ENCODE measurements at regions of chr9 and their contacts with region 1.

Region 1: DNA sequence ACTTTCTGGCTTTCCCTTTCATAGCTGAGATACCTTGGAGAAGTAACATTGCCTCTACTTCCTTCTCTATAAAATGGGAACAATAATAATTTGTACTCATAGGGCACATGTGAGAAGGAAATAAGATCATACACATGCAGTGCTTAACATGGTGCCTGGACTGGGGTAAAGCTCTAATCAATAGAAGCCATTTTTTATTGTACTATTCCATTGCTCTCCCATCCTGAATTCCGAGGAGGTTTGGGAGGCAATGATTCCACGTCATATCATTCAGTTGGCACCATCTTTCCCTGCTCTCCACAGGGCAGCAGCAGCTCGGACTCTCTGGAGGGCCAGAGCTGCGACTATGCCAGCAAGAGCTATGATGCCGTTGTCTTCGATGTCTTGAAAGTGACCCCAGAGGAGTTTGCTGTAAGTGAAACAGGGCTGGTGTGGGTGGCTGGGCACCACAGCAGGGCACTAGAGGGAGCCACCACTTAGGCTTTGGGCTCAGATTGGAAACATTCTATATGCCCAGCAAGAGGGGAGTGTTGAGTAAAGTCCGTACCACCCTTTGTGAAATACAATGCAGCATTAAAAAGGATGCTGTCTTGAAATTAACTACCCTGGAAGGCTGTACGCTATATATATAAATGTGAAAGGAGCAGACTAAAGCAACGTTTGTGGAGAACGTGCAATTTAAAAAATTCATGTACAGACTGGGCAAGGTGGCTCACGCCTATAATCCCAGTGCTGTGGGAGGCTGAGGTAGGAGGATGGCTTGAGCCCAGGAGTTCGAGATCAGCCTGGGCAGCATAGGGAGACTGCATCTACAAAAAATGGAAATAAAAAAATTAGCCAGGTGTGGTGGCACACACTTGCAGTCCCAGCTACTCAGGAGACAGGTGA is 51.2 kb downstream of the RALGPS1 start:
- DNase-seq: peak; percentile 56 to 75
- ATAC-seq: peak; percentile 56
- H3K4me3 ChIP-seq: no peak overlapping the region
- H3K27ac ChIP-seq: no peak overlapping the region
- H3K4me1 ChIP-seq: peaks cover 3% of the 10 kb centered on the region in 2 donors
- H3K27me3 ChIP-seq: no peaks in the 10 kb centered on the region

Region 2: GRCh38 chr9:127122176-127123063 is 156.6 kb after region 1 on chr9 and contains the start of gene ANGPTL2:
- intact Hi-C with region 1: loop called (anchors 10 kb)
- DNase-seq: peak; percentile 95 to 96
- ATAC-seq: peak; percentile 94
- H3K4me3 ChIP-seq: peak within 1 kb of the TSS; percentile 21 to 28
- H3K27ac ChIP-seq: peak within 1 kb of the TSS; percentile 78 to 81
- H3K4me1 ChIP-seq: no peaks in the 10 kb centered on the region
- H3K27me3 ChIP-seq: no peaks in the 10 kb centered on the region
- total RNA-seq, gene ANGPTL2: 36.7 to 44.8 TPM

Region 3: DNA sequence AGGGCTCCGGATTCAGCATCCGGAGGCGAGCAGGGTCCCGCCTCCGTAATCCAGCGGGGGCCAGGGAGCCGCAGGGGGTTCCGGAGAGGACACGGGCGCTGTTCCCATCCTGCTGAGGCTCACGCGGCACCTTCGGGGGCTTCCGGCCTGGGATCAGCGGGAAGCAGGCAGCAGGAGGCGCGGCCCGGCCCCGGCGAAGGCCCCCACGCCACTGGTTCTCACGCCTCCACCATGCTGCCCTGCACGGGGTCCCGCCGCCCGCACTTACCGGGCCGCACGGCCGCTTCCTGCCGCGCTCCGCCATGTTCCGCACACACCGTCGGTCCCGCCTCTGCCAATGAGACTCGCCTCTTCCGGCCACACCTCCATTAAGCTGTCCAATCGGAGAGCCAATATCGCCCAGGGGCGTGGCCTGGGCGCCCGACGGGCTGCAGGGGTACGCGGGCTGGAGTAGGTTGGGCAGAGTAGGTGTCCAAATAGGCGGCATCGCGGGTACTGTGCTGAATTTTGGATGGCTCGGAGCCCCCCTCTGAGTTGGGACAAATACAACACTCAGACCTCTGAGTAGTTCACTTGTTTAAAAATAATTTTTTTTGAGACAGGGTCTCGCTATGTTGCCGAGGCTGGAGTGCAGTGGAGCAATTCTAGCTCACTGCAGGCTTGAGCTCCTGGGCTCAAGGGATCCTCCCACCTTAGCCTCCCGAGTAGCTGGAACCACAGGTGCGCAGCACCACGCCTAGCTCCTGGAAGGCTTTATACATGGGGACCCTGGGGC is 1863.9 kb after region 1 on chr9 and contains the start of gene SPOUT1:
- intact Hi-C with region 1: no loop called
- DNase-seq: peak; percentile 95 to 97
- ATAC-seq: peak; percentile 96
- H3K4me3 ChIP-seq: peak within 1 kb of the TSS; percentile 31 to 44
- H3K27ac ChIP-seq: peak within 1 kb of the TSS in 1 of 2 donors; percentile 37
- H3K4me1 ChIP-seq: no peaks in the 10 kb centered on the region
- H3K27me3 ChIP-seq: no peaks in the 10 kb centered on the region
- total RNA-seq, gene SPOUT1: 28.6 to 32.8 TPM